ENCODE measurements at regions of chr12 and their contacts with region 1.

Region 1: GRCh38 chr12:49553512-49554088 is 14.3 kb downstream of the MCRS1 start:
- DNase-seq: no peak
- H3K4me3 ChIP-seq: no peak overlapping the region
- H3K27ac ChIP-seq: no peak overlapping the region
- H3K27me3 ChIP-seq: peaks cover 23% of the 10 kb centered on the region
- CTCF ChIP-seq: peak; percentile 38

Region 2: DNA sequence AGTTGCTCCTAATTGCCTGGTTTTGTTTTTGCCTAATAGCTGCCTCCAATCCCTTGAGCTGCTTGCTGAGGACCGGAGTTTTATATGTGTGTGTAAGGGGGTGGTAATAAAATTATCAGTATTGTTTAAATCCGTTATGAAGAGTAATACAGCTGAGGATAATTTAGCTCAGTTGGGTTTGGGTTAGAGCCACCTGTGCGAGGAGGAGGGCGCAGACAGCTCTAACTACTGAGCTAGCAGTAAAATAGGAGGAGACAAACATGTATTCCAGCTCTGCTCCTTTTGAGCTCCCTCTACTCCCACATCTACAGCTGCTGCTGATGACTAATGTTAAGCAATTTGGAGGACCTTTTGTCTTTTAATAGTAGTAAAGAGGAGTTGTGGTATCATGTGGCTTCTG is 124.8 kb before region 1 on chr12:
- CTCF ChIA-PET with region 1: no interaction called
- POLR2A ChIA-PET with region 1: no interaction called
- DNase-seq: peak; percentile 24
- H3K4me3 ChIP-seq: no peak overlapping the region
- H3K27ac ChIP-seq: peak overlapping the region; percentile 41
- H3K27me3 ChIP-seq: no peaks in the 10 kb centered on the region
- CTCF ChIP-seq: no peak

Region 3: GRCh38 chr12:51281202-51281924 is 1727.8 kb after region 1 on chr12:
- CTCF ChIA-PET with region 1: interaction called, 13 read pairs
- POLR2A ChIA-PET with region 1: no interaction called
- DNase-seq: no peak
- H3K4me3 ChIP-seq: no peak overlapping the region
- H3K27ac ChIP-seq: peak overlapping the region; percentile 24
- H3K27me3 ChIP-seq: no peaks in the 10 kb centered on the region
- CTCF ChIP-seq: no peak